H1 (cell line): ENCODE measurements at regions of chr12 and their contacts with region 1.

Region 1: DNA sequence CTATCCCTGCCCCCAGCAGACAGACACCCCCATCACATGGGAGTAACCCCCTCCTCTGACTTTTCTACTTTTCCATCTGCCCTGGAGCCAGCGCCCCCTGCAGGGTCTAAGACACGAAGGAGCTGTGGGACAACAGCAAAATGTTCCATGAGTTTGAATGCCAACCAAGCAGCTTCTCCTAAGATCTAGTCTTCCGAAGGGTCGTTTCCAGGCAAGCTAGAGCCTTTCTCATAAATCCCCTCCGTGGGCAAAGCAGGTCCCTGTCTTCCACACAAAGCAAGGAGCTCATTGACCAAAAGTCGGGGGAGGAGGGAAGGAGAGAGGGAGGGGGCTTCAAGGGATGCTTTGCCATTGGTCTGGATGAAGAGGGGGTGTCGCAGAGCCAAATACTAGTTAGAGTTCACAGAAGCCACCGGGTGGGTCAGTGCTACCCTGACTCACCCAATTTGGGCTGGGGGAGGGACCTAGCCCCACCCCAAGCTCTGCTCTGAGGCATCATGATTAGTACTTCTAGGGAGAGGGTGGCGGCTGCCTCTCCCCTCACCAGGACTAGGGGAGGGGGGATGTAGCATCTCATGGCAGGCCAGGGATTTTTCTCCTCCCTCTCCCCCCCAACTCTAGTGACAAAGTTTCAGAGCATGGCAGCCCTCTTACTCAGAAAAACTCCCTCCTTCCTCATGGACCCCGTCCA is 1.6 kb downstream of the MSI1 start:
- DNase-seq: peak in 1 of 2 experiments; percentile 79
- H3K4me3 ChIP-seq: peak overlapping the region; percentile 48 to 84 (median 65)
- H3K27ac ChIP-seq: no peak overlapping the region
- H3K4me1 ChIP-seq: peaks cover 20 to 35% (median 26%) of the 10 kb centered on the region in 4 experiments
- H3K27me3 ChIP-seq: peaks cover 0 to 8% (median 6%) of the 10 kb centered on the region in 4 experiments; a peak in 4 of 7 replicates
- CTCF ChIP-seq: peak; percentile 60 to 76 (median 66)
- EP300 ChIP-seq: no peak
- POLR2A ChIP-seq: no peak
- RAD21 ChIP-seq: peak; percentile 33 to 54; a peak in 2 of 4 replicates

Region 2: DNA sequence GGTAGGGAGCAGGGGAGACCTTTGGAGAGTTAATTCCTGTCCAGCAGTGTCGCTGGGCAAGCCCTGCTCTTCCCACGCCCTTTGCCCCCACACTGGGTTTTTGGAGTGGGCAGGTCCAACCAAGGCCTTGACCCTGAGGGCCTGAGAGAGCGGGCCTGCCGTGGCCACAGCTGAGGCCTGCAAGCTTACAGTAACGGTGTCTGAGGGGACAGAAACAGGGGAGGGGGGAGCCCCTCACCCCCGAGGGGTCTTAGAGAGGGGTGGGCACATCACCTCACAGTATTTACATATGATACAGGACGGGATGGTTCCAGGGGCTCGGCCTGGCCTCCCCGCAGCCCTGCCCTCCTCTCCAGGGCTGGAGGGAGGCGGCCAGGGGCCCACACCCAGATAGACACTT is 25.2 kb before region 1 on chr12:
- CTCF ChIA-PET with region 1: interaction called, 13 read pairs
- POLR2A ChIA-PET with region 1: interaction called, 3 read pairs
- DNase-seq: peak in 1 of 2 experiments; percentile 54
- H3K4me3 ChIP-seq: 0 out of 8 replicates have a peak overlapping the region, but pooled peaks of 1 of the 4 experiments have one; percentile 9
- H3K27ac ChIP-seq: no peak overlapping the region; the same call in 1 of the 2 replicates
- H3K4me1 ChIP-seq: peaks cover 0 to 9% (median 4%) of the 10 kb centered on the region in 4 experiments; a peak in 5 of 7 replicates
- H3K27me3 ChIP-seq: no peaks in the 10 kb centered on the region
- CTCF ChIP-seq: no peak
- EP300 ChIP-seq: no peak
- POLR2A ChIP-seq: no peak
- RAD21 ChIP-seq: no peak

Region 3: GRCh38 chr12:120381752-120382419 is 14.5 kb after region 1 on chr12:
- CTCF ChIA-PET with region 1: interaction called, 37 read pairs
- POLR2A ChIA-PET with region 1: interaction called, 78 read pairs
- DNase-seq: no peak
- H3K4me3 ChIP-seq: no peak overlapping the region
- H3K27ac ChIP-seq: no peak overlapping the region
- H3K4me1 ChIP-seq: peaks cover 0 to 3% (median 1%) of the 10 kb centered on the region in 4 experiments; a peak in 4 of 7 replicates
- H3K27me3 ChIP-seq: no peaks in the 10 kb centered on the region
- CTCF ChIP-seq: no peak
- EP300 ChIP-seq: no peak
- POLR2A ChIP-seq: no peak
- RAD21 ChIP-seq: no peak

Region 4: DNA sequence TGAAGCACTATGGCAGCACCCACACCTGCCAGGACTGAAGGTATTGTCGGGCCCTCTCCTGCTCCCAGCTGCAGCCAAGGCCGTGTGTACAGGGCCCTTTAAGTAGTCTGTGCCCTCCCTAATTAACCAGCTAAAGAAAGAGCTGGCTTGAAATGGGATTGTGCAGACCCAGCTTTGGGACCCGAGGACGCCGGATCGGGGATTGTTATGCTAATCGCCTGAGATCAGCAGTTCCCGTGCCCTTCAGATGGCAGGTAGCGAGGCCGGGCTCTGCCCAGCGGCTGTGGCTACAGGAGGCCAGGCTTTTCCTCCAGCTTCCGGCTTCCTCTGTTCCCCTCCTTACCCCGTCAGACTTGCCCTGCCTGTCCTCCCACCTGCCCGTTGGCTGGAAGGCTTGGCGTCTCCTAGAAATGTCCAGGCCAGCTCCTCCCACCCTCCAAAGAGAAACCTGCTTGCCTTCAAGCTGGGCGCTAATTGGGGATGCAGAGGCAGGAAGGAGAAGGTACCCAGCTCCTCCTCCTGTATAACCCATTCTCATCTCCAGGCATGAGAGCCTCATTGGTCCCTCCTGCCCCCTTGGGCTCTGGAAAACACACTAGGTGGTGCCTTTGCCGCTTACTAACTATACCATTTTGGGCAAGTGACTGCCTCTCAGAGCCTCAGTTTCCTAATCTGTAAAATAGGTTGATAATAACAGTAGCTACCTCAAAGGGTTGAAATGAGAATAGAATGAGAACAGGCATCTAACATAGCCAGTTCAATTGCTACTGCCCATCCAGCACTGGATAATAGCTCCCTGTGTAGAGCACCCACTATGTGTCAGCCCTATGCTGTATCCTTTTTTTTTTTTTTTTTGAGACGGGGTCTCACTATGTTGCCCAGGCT is 27.3 kb after region 1 on chr12:
- CTCF ChIA-PET with region 1: interaction called, 26 read pairs
- POLR2A ChIA-PET with region 1: interaction called, 16 read pairs
- DNase-seq: peak; percentile 69 to 80
- H3K4me3 ChIP-seq: peak overlapping the region in 2 of 4 experiments; percentile 1 to 36; a peak in 2 of 8 replicates
- H3K27ac ChIP-seq: peak overlapping the region; percentile 5; the same call in 1 of the 2 replicates
- H3K4me1 ChIP-seq: peaks cover 4 to 22% (median 10%) of the 10 kb centered on the region in 4 experiments
- H3K27me3 ChIP-seq: no peaks in the 10 kb centered on the region
- CTCF ChIP-seq: 0 out of 4 replicates have a peak, but pooled peaks of 1 of the 3 experiments have one; percentile 3
- EP300 ChIP-seq: peak in 1 of 2 experiments; percentile 40; a peak in 1 of 3 replicates
- POLR2A ChIP-seq: peak in 1 of 2 experiments; percentile 54; a peak in 1 of 3 replicates
- RAD21 ChIP-seq: no peak; a peak in 1 of 4 replicates

Region 5: GRCh38 chr12:120413901-120414695 is 46.7 kb after region 1 on chr12:
- CTCF ChIA-PET with region 1: interaction called, 19 read pairs
- POLR2A ChIA-PET with region 1: interaction called, 10 read pairs
- DNase-seq: peak; percentile 80 to 89
- H3K4me3 ChIP-seq: peak overlapping the region in 3 of 4 experiments; percentile 6 to 36 (median 23); a peak in 4 of 8 replicates
- H3K27ac ChIP-seq: peak overlapping the region; percentile 70; the same call in 1 of the 2 replicates
- H3K4me1 ChIP-seq: peaks cover 0 to 10% (median 6%) of the 10 kb centered on the region in 4 experiments; a peak in 3 of 7 replicates
- H3K27me3 ChIP-seq: no peaks in the 10 kb centered on the region
- CTCF ChIP-seq: no peak
- EP300 ChIP-seq: no peak; a peak in 1 of 3 replicates
- POLR2A ChIP-seq: peak; percentile 51 to 80
- RAD21 ChIP-seq: peak; percentile 1 to 14; a peak in 2 of 4 replicates

Region 6: DNA sequence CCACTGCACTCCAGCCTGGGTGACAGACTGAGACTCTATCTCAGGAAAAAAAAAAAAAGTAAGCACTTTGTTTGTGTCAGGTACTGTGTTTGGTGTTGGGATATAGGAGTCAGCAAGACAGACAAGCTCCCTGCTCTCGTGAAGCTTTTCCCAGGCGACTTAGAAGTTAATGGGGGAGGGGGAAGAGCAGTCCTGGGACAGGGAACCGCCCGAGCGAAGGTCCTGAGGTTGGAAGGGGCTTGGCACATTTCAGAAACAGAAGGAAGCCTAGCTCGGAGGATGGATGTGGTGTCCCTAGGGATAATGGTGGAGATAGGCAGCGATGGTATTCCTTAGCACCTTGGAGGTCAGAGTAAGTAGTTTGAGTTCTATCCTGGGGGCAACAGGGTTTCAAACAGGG is 62.0 kb after region 1 on chr12:
- CTCF ChIA-PET with region 1: interaction called, 310 read pairs
- POLR2A ChIA-PET with region 1: interaction called, 11 read pairs
- DNase-seq: no peak
- H3K4me3 ChIP-seq: no peak overlapping the region
- H3K27ac ChIP-seq: no peak overlapping the region
- H3K4me1 ChIP-seq: peaks cover 0 to 6% (median 0%) of the 10 kb centered on the region in 4 experiments; a peak in 1 of 7 replicates
- H3K27me3 ChIP-seq: no peaks in the 10 kb centered on the region
- CTCF ChIP-seq: no peak
- EP300 ChIP-seq: no peak
- POLR2A ChIP-seq: no peak
- RAD21 ChIP-seq: no peak